Activated CD4-positive, alpha-beta T cell treated with anti-CD3 and anti-CD28 coated beads for 36 hours (primary cell): ENCODE measurements at regions of chr18 and their contacts with region 1.

Region 1: GRCh38 chr18:25669741-25670140 is 317.8 kb upstream of the ZNF521 start:
- DNase-seq: no peak
- ATAC-seq: no peak
- H3K4me3 Mint-ChIP-seq: no peak overlapping the region
- H3K27ac Mint-ChIP-seq: no peak overlapping the region
- H3K4me1 Mint-ChIP-seq: no peaks in the 10 kb centered on the region
- H3K27me3 Mint-ChIP-seq: peaks cover 2% of the 10 kb centered on the region

Region 2: DNA sequence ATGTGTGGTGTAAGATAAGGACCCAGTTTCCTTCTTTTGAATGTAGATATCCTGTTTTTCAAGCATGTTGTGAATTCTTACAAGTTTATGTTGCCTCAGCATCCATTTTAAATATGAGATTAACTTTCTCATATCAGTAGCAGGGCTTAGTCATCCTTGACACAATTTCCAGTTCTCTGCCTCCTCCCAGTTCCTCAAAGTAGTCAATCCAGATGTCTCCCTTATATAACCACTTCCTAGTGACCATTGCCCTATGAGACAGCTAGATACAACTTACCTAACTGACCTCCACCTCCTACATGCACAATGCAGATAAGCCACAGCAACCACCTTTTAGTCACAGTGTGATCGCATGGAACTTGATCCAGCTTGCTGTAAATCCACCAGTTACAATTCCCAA is 48.6 kb before region 1 on chr18:
- CTCF ChIA-PET with region 1: no interaction called
- POLR2A ChIA-PET with region 1: no interaction called
- intact Hi-C with region 1: loop called in 1 of 2 experiments (anchors 10 kb)
- DNase-seq: no peak
- ATAC-seq: no peak
- H3K4me3 Mint-ChIP-seq: no peak overlapping the region
- H3K27ac Mint-ChIP-seq: no peak overlapping the region
- H3K4me1 Mint-ChIP-seq: no peaks in the 10 kb centered on the region
- H3K27me3 Mint-ChIP-seq: no peaks in the 10 kb centered on the region

Region 3: DNA sequence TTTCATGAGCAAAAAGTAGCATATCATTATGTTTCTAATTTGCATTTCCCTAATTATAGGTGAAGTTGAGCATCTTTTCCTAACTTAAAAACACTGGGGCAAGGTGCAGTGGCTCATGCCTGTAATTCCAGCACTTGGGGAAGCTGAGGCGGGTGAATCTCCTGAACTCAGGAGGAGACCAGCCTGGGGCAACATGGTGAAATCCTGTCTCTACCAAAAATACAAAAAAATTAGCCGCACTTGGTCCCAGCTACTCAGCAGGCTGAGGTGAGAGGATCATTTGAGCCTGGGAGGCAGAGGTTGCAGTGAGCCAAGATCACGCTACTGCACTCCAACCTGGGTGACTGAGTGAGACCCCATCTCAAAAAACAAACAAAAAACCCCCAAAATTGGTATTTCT is 25.8 kb before region 1 on chr18:
- CTCF ChIA-PET with region 1: no interaction called
- POLR2A ChIA-PET with region 1: no interaction called
- intact Hi-C with region 1: loop called in 1 of 2 experiments (anchors 2 kb)
- DNase-seq: no peak
- ATAC-seq: no peak
- H3K4me3 Mint-ChIP-seq: no peak overlapping the region
- H3K27ac Mint-ChIP-seq: no peak overlapping the region
- H3K4me1 Mint-ChIP-seq: no peaks in the 10 kb centered on the region
- H3K27me3 Mint-ChIP-seq: no peaks in the 10 kb centered on the region

Region 4: DNA sequence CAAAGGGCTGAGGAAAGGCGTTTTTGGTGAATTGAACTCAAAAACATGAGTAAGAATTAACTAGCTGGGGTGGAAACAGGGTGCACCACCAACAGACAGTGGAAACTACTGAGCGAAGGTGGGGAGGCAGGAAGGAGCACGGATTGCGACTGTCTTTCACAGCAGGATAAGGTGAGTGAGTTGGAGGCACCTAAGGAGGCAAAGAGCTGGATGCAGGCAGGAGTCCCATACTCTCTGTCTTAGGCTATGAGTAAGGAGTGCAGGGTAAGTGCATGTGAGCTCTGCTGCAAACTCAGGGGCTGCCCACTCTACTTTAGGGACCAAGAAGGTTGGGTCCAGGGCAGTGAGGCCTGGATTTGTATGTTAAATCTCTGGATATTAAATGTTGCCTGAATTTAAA is 15.3 kb after region 1 on chr18:
- CTCF ChIA-PET with region 1: no interaction called
- POLR2A ChIA-PET with region 1: no interaction called
- intact Hi-C with region 1: no loop called
- DNase-seq: no peak
- ATAC-seq: no peak
- H3K4me3 Mint-ChIP-seq: no peak overlapping the region
- H3K27ac Mint-ChIP-seq: no peak overlapping the region
- H3K4me1 Mint-ChIP-seq: no peaks in the 10 kb centered on the region
- H3K27me3 Mint-ChIP-seq: peaks cover 6% of the 10 kb centered on the region